Sciatic nerve (tissue), 2 donors: ENCODE measurements at regions of chr2 and their contacts with region 1.

Region 1: GRCh38 chr2:229416116-229416694 is 145.1 kb upstream of the PID1 start:
- DNase-seq: peak; percentile 71
- ATAC-seq: peak; percentile 98

Region 2: DNA sequence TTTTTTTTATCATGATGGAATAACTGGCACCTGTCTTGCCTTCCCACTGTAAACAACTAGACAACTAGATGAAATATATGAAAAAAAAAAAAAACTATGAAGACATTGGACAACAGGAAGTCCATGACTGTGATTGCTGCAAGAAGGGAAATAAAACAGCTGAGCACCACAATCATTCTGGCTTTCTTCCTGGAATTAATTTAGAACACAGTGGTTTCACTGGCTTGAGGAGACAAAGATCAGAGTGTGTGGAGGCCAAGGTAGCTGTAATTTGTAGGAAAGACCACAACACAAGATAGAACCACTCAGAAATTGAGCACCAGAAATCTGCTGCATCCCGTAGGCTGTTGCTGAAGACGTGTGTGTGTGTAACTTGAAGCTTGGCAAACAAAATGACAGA is 24.0 kb before region 1 on chr2:
- intact Hi-C with region 1: loop called (anchors 2 kb)
- DNase-seq: no peak
- ATAC-seq: peak; percentile 88

Region 3: DNA sequence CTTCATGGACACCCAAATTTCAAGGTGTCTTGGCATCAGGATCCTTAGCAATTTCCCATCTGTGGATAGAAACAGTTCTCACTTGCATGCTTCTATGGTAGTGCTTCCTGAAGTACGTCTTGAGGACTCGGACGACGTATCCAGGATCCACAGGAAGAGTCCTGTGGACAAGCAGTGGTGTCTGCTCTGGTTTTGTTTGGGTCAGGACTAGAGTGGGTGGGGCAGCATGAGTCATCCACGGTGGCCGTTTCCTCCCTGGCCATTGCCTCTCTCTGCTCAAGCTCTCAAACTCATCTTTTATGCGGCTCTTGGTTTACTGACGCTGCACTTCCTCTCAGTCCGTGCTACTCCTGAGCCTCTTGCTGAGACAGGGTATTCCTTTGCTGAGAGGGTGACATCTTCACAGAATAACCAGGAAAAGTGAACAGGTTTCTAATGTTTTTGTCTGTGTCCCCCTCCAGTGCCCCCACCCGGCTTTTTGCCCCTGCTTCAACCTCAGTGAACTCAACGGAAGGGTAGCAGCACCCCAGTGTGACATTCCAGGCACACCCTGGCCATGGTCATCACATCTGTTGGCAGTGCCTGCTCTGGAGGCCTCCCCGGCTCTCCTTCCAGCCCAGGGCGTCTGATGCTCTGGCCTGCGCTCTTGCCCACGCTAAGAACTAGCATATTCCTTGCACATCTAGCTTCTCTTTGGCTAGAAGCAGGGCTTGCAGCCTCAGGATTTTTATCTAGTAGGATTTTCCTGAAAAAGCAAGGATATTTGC is 1844.4 kb after region 1 on chr2:
- intact Hi-C with region 1: no loop called
- DNase-seq: no peak
- ATAC-seq: peak; percentile 20